BJ (cell line): ENCODE measurements at regions of chr12 and their contacts with region 1.

Region 1: GRCh38 chr12:50187084-50187900 is 20.1 kb upstream of the CERS5 start:
- DNase-seq: peak; percentile 94
- H3K4me3 ChIP-seq: no peak overlapping the region
- H3K27me3 ChIP-seq: no peaks in the 10 kb centered on the region
- CTCF ChIP-seq: no peak

Region 2: DNA sequence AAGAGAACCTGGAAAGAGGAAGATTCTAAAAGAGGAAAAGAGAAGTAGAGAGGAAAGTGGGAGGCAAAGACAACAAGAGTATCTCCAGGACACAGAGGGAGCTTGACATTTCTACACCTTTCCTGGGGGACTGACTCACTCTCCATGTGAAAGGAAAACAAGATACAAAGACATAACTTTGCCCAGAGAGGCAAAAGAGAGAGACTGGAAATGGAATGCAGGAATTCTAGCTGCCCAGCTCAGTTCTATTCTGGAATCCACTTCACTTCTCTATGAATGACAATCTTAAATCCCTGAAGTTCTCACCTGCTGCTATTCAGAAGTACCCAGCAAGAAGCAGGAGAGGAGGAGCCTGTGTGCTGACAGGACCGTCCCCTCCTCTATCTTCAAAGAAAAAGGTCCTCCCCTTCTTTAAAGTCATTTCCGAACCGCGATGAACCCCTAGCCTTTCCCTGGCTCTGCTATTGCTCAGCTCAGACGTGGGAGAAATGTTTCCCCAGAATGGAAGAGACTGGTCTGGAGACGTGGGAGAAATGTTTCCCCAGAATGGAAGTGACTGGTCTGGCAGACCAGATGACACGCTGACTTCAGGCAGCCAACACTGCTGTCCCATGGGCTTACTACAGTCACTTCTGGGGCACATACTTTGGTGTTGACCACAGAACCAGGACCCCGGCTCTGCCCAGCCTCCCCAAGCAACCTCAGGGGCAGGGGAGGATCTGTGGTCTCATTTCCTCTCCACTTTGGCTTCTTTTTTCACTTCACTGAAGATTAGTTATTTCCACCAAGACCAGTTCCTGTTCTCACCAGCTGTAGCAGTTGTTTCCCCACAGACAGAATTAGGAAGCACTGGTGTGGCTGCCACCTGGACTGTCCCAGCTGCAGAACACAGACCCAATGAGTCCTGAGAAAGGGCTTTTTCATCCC is 488.4 kb before region 1 on chr12:
- CTCF ChIA-PET with region 1: no interaction called
- POLR2A ChIA-PET with region 1: no interaction called
- DNase-seq: no peak
- H3K4me3 ChIP-seq: no peak overlapping the region
- H3K27me3 ChIP-seq: no peaks in the 10 kb centered on the region
- CTCF ChIP-seq: no peak

Region 3: DNA sequence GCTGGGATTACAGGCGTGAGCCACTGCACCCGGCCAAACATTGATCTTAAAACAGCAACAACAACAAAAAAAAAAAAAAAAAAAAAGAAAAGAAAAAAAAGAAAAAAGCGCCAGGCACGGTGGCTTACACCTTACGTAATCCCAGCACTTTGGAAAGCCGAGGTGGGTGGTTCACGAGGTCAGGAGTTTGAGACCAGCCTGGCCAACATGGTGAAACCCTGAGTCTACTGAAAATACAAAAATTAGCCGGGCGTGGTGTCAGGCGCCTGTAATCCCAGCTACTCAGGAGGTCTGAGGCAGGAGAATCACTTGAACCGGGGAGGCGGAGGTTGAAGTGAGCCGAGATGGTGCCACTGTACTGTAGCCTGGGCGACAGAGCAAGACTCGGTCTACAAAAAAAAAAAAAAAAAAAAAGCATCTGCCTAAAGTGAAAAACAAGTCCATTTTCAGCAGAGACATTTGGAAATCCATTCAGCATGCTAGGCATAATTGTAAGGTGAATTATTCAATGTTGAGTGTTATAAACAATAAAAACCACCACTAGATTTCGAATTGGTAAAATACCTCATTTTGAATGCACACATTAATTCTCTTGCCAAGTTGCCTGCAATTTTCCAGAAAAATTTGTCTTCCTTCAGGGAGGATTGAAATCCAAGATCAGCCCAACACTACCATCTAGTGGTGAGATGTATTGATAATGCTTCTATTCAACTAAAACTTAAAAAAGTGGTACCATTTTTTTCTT is 12.1 kb before region 1 on chr12:
- CTCF ChIA-PET with region 1: interaction called, 21 read pairs
- POLR2A ChIA-PET with region 1: no interaction called
- DNase-seq: no peak
- H3K4me3 ChIP-seq: no peak overlapping the region
- H3K27me3 ChIP-seq: no peaks in the 10 kb centered on the region
- CTCF ChIP-seq: peak; percentile 51

Region 4: GRCh38 chr12:50387487-50388478 is 200.5 kb after region 1 on chr12:
- CTCF ChIA-PET with region 1: no interaction called
- POLR2A ChIA-PET with region 1: no interaction called
- DNase-seq: no peak
- H3K4me3 ChIP-seq: no peak overlapping the region
- H3K27me3 ChIP-seq: no peaks in the 10 kb centered on the region
- CTCF ChIP-seq: no peak